Activated CD4-positive, alpha-beta T cell treated with anti-CD3 and anti-CD28 coated beads, Interleukin-2, amount 10 ng/mL, durations not matched to agents 24 days and 14 days (primary cell): ENCODE measurements at regions of chr19 and their contacts with region 1.

Region 1: GRCh38 chr19:46614114-46614722 is 10.7 kb downstream of the PTGIR start:
- DNase-seq: peak; percentile 95
- H3K4me3 Mint-ChIP-seq: peak overlapping the region; percentile 53
- H3K27ac Mint-ChIP-seq: peak overlapping the region; percentile 71
- H3K4me1 Mint-ChIP-seq: peaks cover 58% of the 10 kb centered on the region
- H3K27me3 Mint-ChIP-seq: no peaks in the 10 kb centered on the region

Region 2: DNA sequence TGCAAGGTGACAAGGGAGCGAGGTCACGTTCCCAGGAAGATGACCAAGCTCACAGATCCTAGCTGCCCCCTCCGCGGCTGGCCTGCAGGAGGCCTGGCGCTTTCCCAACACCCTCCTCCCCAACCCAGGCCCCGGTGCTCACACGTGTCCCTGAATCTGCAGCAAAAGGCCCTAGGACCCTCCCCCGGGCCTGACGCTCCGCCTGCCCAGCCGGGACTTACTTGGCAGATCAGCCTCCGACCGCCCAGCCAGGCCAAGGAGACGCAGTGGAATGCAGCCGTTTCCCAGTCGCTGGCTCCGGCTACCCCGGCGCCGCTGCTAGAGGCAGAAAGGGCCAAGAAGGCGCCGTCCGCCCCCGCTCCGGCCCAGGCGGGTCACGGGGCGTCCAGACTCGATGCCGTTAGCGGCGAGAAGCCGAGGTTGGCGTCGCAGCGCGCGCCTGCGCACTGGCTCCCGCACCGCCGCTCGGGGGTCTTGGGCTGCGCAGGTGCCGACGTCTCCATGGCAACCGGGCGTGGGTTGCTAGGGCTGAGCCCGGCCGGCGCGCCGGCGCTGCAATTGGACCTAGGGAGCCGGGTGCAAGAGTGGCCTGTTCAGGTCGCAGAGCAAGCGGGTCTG is 143.0 kb before region 1 on chr19 and contains the start of gene PNMA8A:
- intact Hi-C with region 1: no loop called
- DNase-seq: no peak
- H3K4me3 Mint-ChIP-seq: no peak within 1 kb of the TSS
- H3K27ac Mint-ChIP-seq: no peak within 1 kb of the TSS
- H3K4me1 Mint-ChIP-seq: no peaks in the 10 kb centered on the region
- H3K27me3 Mint-ChIP-seq: peaks cover 50% of the 10 kb centered on the region
- total RNA-seq, gene PNMA8A: not detected in 2 replicates

Region 3: DNA sequence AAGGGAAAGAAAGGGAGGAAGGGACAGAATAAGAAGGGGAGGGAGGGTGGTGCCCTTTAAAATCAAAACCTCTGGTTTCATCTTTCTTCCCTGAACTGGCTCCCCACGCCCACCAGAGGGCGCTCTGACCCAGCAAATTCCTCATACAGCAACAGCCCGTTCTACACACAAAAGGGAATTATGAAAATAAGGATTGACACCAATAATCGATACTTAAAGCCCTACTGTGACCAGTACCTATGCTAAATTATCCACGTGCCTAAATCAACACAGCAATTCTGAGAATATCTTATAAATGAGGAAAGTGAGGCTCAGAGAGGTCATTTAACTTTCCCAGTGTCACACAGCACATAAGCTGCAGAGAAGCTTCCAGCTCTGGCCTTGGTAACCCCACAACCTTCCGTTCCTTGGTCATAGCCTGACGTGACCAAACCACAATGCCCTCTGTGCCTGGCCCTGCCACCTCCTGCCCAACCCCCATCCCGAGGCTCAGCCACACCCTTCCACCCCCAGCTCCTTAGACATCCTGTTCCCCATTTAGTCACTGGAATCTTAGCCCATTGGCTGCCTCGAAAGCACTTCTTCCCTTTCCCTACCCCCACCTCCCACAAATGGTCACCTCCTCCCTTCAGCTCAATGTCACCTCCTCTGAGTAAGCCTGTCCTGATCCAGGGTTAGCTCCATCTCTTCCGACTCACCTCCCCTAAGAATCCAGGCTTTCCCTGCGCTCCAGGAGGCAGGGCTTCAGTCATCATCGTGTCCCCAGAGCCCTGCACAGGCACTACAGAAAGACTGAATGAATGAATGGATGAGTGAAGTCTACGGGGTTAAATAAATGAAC is 84.4 kb before region 1 on chr19:
- intact Hi-C with region 1: no loop called
- DNase-seq: peak; percentile 92
- H3K4me3 Mint-ChIP-seq: peak overlapping the region; percentile 8
- H3K27ac Mint-ChIP-seq: peak overlapping the region; percentile 39
- H3K4me1 Mint-ChIP-seq: peaks cover 23% of the 10 kb centered on the region
- H3K27me3 Mint-ChIP-seq: no peaks in the 10 kb centered on the region

Region 4: GRCh38 chr19:46600384-46601317 is 13.6 kb before region 1 on chr19:
- intact Hi-C with region 1: loop called (anchors 1 kb)
- DNase-seq: peak; percentile 99
- H3K4me3 Mint-ChIP-seq: peak overlapping the region; percentile 97
- H3K27ac Mint-ChIP-seq: peak overlapping the region; percentile 100
- H3K4me1 Mint-ChIP-seq: peaks cover 18% of the 10 kb centered on the region
- H3K27me3 Mint-ChIP-seq: no peaks in the 10 kb centered on the region

Region 5: GRCh38 chr19:46624958-46625661 is 10.9 kb after region 1 on chr19 and contains the start of gene PTGIR:
- intact Hi-C with region 1: loop called (anchors 1 kb)
- DNase-seq: peak; percentile 82
- H3K4me3 Mint-ChIP-seq: peak within 1 kb of the TSS; percentile 96
- H3K27ac Mint-ChIP-seq: peak within 1 kb of the TSS; percentile 96
- H3K4me1 Mint-ChIP-seq: peaks cover 43% of the 10 kb centered on the region
- H3K27me3 Mint-ChIP-seq: no peaks in the 10 kb centered on the region
- total RNA-seq, gene PTGIR: 194 TPM in 2 replicates

Region 6: DNA sequence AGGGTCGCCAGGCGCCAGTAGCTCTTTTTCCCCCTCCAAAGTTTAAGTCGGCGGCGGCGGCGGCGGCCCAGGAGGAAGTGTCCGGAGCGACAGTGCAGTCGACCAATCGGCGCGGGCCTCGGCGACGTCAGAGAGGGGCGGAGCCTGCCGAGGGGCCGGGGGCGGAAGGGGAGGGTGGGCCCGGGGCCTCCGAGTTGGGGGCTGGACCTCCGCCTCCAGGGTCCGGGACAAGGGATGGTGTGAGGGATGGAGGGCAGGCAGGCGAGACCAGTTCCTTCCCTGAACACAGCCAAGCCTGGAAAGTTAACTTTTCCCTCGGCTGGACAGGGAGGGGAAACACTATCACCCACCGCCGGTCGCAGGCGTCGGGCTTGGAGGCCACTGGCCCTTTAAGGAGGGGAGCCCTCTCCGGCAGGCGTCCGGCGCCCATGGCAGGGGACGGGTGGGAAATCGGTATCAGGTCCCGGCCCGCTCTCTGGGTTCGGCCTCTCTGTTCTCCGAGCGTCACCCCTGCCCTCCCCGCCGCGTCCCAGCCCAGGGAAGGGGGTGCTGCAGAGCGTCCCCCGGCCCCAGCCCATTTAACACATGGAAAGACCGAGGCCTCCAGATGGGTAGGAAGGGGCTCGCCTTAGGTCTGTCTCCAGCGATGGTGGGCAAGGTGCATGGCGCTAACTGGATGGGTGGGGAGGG is 103.0 kb after region 1 on chr19 and contains the start of gene PRKD2:
- intact Hi-C with region 1: loop called (anchors 5 kb)
- DNase-seq: peak; percentile 98
- H3K4me3 Mint-ChIP-seq: peak within 1 kb of the TSS; percentile 97
- H3K27ac Mint-ChIP-seq: peak within 1 kb of the TSS; percentile 94
- H3K4me1 Mint-ChIP-seq: peaks cover 51% of the 10 kb centered on the region
- H3K27me3 Mint-ChIP-seq: no peaks in the 10 kb centered on the region
- total RNA-seq, gene PRKD2: 89.1 and 90.5 TPM in 2 replicates

Region 7: DNA sequence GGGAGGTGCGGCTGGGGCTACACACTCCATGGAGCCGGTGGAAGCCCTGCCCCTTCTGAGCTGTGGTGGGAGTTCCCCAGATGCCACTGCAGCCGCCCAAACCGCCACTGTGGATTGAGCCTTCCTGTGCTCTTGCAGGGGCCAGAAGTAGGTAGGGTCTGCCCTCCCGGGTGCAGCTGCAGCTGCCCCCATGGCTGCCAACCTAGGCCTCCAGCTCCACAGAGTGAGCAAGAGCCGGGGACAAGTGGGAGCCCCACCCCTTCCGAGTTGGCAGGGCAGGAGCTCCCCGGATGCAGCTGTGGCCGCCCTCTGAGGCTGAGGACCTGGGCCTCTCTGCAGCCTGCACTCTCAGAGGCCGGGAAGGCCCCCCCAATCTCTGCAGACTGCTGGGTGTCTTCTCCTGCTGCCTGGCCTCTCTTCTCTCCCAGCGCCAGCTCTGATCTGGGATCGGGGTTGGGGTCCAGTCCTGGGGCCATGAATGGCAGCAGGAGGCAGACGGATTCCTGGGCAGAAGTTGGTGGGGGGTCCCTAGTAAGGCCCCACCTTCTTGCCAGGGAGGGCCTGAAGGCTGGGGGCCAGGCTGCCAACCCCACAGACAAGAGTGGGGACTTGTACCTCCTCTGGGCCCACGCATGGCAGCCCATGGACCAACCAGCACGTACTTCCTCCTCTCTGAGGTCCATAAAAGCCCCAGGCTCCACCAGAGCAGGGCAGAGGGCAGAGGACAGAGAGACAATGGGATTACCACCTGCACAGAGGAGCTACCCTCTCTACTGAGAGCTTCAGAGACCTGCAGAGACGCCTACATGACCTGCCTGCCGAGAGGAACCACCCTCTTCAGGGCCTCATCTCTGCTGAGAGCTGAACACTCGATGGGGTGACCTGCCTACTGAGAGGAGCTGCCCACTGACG is 207.5 kb after region 1 on chr19:
- intact Hi-C with region 1: no loop called
- DNase-seq: peak; percentile 88
- H3K4me3 Mint-ChIP-seq: peak overlapping the region; percentile 50
- H3K27ac Mint-ChIP-seq: peak overlapping the region; percentile 77
- H3K4me1 Mint-ChIP-seq: peaks cover 38% of the 10 kb centered on the region
- H3K27me3 Mint-ChIP-seq: no peaks in the 10 kb centered on the region